ENCODE measurements at regions of chr13 and their contacts with region 1.

Region 1: DNA sequence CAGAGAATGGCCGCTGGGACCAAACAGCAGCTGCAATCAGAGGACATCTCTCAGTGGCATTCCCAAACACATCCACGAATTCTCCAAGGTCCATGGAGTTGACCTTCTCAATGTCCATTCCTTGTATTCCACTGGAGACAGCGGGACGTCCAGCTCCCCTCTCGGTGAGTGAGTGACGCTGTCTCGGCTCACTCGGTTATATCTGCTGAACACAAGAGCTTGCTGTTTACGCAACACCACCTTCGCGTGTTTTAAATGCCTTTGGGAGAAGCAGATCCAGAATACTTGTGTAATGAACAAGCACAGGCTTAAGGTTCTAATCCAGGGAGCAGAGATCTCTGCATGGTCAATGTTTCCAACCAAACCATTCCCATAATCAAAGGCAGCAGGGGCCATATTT is at the start of gene URAD:
- DNase-seq: no peak
- H3K4me3 ChIP-seq: no peak within 1 kb of the TSS
- H3K27ac ChIP-seq: no peak within 1 kb of the TSS
- H3K4me1 ChIP-seq: peaks cover 8% of the 10 kb centered on the region
- H3K27me3 ChIP-seq: peaks cover 4% of the 10 kb centered on the region
- CTCF ChIP-seq: no peak
- total RNA-seq, gene URAD: not detected

Region 2: GRCh38 chr13:27770809-27771208 is 217.7 kb before region 1 on chr13:
- CTCF ChIA-PET with region 1: no interaction called
- dilution Hi-C with region 1: no loop called
- in situ Hi-C with region 1: no loop called
- intact Hi-C with region 1: loop called (anchors 2 kb)
- DNase-seq: peak; percentile 86
- H3K4me3 ChIP-seq: no peak overlapping the region
- H3K27ac ChIP-seq: no peak overlapping the region
- H3K4me1 ChIP-seq: no peaks in the 10 kb centered on the region
- H3K27me3 ChIP-seq: no peaks in the 10 kb centered on the region
- CTCF ChIP-seq: peak; percentile 70 to 78

Measured in mammary epithelial cell (primary cell).